Activated CD4-positive, alpha-beta T cell treated with anti-CD3 and anti-CD28 coated beads for 36 hours (primary cell): ENCODE measurements at regions of chr19 and their contacts with region 1.

Region 1: GRCh38 chr19:11090054-11090900 is 1.0 kb downstream of the LDLR start:
- DNase-seq: peak; percentile 99
- ATAC-seq: peak; percentile 88
- H3K4me3 Mint-ChIP-seq: peak overlapping the region; percentile 93
- H3K27ac Mint-ChIP-seq: peak overlapping the region; percentile 97
- H3K4me1 Mint-ChIP-seq: peaks cover 51% of the 10 kb centered on the region
- H3K27me3 Mint-ChIP-seq: no peaks in the 10 kb centered on the region

Region 2: GRCh38 chr19:10593820-10594637 is 496.2 kb before region 1 on chr19:
- CTCF ChIA-PET with region 1: no interaction called
- POLR2A ChIA-PET with region 1: no interaction called
- intact Hi-C with region 1: no loop called
- DNase-seq: no peak
- ATAC-seq: no peak
- H3K4me3 Mint-ChIP-seq: no peak overlapping the region
- H3K27ac Mint-ChIP-seq: no peak overlapping the region
- H3K4me1 Mint-ChIP-seq: peaks cover 24% of the 10 kb centered on the region
- H3K27me3 Mint-ChIP-seq: no peaks in the 10 kb centered on the region

Region 3: DNA sequence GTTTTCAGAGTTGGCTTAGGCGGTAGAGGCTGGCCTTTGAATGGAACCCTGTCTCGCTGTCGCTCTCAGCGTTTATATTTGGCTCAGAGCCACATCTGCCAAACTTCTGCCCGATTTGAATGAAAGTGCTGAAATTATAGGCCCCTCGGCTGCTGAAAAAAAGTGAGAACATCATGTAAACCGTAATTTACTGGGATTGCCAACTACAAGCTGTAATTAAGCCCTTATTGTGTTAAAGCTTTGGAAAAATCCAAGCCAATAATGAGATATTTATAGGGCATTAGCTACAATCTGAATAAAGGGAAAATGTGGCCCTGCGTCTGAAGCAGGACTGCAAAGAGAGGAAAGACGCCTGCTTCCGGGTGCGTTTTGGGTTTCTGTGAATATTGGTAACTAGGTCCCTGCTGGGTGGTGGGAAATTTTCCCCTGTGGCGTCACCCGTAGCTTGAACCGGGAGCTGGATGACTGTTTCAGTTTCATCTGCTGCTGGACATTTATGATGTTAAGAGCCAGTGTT is 362.5 kb before region 1 on chr19:
- CTCF ChIA-PET with region 1: no interaction called
- POLR2A ChIA-PET with region 1: no interaction called
- intact Hi-C with region 1: no loop called
- DNase-seq: no peak
- ATAC-seq: no peak
- H3K4me3 Mint-ChIP-seq: no peak overlapping the region
- H3K27ac Mint-ChIP-seq: peak overlapping the region; percentile 37
- H3K4me1 Mint-ChIP-seq: peaks cover 59% of the 10 kb centered on the region
- H3K27me3 Mint-ChIP-seq: no peaks in the 10 kb centered on the region

Region 4: GRCh38 chr19:10797541-10798256 is 292.6 kb before region 1 on chr19:
- CTCF ChIA-PET with region 1: no interaction called
- POLR2A ChIA-PET with region 1: no interaction called
- intact Hi-C with region 1: loop called in 1 of 2 experiments (anchors 1 kb)
- DNase-seq: peak; percentile 95
- ATAC-seq: peak; percentile 94
- H3K4me3 Mint-ChIP-seq: peak overlapping the region; percentile 68
- H3K27ac Mint-ChIP-seq: peak overlapping the region; percentile 97
- H3K4me1 Mint-ChIP-seq: peaks cover 36% of the 10 kb centered on the region
- H3K27me3 Mint-ChIP-seq: no peaks in the 10 kb centered on the region

Region 5: DNA sequence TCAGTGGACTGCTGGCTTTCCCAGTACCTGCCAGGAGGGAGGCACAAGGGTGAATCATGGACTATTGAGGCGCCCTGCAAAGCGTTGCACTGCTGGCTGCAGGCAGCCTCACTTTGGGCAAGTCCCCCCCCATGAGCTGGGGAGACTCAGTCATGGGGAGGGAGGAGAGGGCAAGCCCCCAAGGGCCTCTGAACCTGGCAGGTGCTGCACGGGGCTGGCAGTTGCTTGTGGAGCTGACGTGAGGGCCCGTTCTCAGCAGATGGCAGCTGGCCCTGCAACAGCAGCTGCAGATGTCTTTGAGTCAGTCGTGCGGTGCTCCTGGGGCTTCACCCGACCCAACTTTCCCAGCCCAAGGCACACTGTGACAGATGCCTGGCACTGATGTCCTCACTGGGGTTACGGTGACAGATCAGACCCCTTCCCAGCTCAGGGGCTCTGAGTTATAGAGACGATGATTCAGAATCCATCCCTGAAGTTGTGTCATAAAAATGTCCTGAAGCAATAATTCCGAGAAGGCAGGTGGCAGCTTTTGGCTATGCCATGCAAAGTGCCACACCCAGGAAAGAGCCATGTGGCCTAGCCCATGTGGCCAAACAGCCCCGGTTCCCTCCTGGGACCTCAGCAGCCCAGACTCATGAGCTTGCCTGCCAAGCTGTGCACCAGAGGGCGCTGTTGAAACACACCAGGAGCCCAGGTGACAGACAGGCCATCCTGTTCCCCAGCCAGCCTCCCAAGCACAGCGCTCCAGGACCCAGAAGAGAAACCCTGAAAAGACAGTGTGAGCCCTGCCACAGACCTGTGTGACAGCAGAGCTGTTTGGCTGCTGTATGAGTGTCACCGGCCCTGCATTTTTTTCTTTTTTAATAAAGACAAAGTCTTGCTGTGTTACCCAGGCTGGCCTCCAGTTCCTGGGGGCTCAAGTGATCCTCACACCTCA is 54.6 kb before region 1 on chr19:
- CTCF ChIA-PET with region 1: interaction called, 4 read pairs
- POLR2A ChIA-PET with region 1: interaction called, 7 read pairs
- intact Hi-C with region 1: loop called (anchors 1 to 5 kb)
- DNase-seq: peak; percentile 94
- ATAC-seq: peak; percentile 99
- H3K4me3 Mint-ChIP-seq: no peak overlapping the region
- H3K27ac Mint-ChIP-seq: peak overlapping the region; percentile 9
- H3K4me1 Mint-ChIP-seq: peaks cover 6% of the 10 kb centered on the region
- H3K27me3 Mint-ChIP-seq: no peaks in the 10 kb centered on the region

Region 6: GRCh38 chr19:11155373-11156120 is 65.3 kb after region 1 on chr19 and contains the start of gene SPC24:
- CTCF ChIA-PET with region 1: interaction called, 3 read pairs
- POLR2A ChIA-PET with region 1: interaction called, 4 read pairs
- intact Hi-C with region 1: loop called (anchors 1 kb)
- DNase-seq: peak; percentile 97
- ATAC-seq: peak; percentile 99
- H3K4me3 Mint-ChIP-seq: peak within 1 kb of the TSS; percentile 79
- H3K27ac Mint-ChIP-seq: peak within 1 kb of the TSS; percentile 80
- H3K4me1 Mint-ChIP-seq: peaks cover 12% of the 10 kb centered on the region
- H3K27me3 Mint-ChIP-seq: no peaks in the 10 kb centered on the region
- total RNA-seq, gene SPC24: 59.6 to 72.2 TPM

Region 7: GRCh38 chr19:11535792-11536595 is 445.7 kb after region 1 on chr19:
- CTCF ChIA-PET with region 1: no interaction called
- POLR2A ChIA-PET with region 1: no interaction called
- intact Hi-C with region 1: loop called in 1 of 2 experiments (anchors 1 kb)
- DNase-seq: peak; percentile 94
- ATAC-seq: peak; percentile 76
- H3K4me3 Mint-ChIP-seq: peak overlapping the region; percentile 2
- H3K27ac Mint-ChIP-seq: peak overlapping the region; percentile 51
- H3K4me1 Mint-ChIP-seq: peaks cover 17% of the 10 kb centered on the region
- H3K27me3 Mint-ChIP-seq: peaks cover 14% of the 10 kb centered on the region